GM18951 (cell line): ENCODE measurements at regions of chr1 and their contacts with region 1.

Region 1: DNA sequence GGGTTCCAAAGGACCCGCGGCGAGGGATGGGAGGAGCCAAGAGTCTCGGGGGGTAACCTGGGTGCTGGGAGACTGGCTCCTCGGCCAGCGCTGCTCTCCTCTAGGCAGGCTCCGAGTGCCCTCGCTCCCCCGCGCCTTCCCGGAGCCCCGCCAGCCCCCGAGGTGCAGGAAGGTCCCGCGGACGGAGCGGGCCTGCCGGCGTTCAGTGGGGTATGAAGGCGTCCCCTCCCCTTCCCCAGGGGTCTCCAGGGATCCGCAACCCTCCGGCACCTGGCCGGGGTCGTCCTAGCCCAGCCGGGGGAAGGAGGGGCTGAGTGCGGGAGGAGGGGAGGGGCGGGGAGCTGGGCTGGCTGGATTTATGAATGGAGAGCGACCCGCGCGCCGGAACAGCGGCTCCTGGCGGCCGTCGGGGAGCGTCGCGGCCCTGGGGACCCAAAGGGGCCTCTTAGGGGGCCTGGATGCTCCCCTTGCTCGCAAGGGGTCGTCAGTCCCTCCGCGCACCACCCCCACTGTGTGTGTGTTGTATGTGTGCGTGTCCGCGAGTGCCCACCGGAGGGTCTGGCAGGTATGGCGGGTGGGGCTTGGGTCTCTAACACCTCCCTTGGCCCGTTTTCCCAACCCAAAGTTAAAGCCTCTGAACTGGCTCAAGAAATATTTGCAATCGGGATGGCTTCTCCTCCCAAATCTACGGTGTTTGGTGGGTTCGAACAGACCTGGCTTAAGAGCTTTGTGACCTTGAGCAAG is 600 bp downstream of the HCRTR1 start:
- POLR2A ChIP-seq: no peak

Region 2: DNA sequence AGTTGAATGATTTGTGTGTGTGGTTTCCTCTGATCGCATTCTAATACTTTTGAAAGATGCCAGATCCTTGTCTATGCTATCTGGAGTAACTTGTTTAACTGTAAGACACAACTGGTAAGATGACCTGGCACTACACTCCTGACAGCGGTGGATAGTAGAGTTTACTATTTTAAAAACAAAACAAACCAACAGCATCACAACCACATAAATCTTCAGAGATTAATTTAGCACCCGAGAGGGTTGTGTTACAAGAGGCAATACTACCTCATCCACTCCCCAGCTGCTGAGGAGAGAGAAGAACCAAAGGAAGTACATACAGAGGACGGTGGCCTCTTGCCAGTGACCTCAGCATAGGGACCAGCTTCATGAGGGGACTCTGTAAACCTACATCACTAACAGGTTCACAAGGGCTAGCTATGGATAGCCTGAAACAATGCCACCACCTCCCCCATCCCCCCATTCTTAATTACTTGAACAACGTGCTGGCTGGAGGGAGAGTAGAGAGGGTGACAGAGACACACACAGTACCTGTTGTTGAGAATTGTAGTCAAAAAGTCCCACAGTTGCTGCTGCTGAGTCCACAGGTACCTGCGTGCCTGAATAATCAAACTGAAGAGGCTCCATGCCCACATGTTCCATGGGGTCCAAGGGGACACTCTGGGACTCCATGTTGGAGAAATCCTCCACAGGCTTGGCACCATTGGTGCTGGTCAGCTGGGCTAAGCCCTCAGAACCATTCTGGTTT is 626.1 kb before region 1 on chr1:
- in situ Hi-C with region 1: no loop called
- POLR2A ChIP-seq: no peak

Region 3: DNA sequence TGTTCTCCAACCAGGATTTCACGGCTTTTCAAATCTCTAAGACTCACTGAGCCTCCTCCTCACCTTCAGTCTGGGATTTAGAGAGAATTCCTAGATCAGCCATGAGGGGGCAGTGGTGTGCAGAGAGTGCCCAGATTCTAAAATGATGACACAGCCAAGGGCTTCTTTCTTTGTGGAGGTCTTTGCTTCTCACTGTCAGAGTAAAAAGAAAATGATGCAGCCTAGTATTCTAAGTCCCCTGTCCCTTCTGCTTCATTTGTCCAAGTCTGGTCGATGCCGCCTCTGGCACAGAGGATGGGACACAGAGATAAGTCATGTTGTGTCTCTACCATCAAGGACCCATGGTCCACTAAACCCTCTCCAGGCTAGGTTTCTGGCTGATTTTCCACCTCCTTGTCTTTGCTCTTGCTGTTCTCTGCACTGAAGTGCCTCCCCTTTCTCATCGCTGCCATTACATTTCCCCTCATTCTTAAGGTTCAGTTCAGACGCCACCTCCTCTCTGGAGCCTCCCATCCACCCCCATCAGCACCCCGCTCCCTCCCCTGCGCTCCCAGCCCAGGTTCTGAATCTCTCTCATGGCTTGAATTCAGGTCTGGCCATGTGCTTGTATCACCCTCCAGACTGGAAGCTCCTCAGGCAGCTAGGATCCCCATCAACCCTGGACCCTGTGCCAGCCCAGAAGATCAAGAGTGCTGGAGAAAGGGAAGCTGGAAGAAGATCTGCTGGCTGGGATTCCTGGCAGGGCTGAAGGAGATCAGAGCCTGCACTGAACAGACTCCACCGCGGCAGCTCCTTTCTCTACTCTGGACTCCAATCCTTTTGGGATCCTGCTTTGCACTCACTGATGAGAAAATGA is 53.7 kb before region 1 on chr1:
- in situ Hi-C with region 1: loop called (anchors 10 kb)
- POLR2A ChIP-seq: no peak